Uterus (tissue), 4 donors: ENCODE measurements at regions of chr10 and their contacts with region 1.

Region 1: DNA sequence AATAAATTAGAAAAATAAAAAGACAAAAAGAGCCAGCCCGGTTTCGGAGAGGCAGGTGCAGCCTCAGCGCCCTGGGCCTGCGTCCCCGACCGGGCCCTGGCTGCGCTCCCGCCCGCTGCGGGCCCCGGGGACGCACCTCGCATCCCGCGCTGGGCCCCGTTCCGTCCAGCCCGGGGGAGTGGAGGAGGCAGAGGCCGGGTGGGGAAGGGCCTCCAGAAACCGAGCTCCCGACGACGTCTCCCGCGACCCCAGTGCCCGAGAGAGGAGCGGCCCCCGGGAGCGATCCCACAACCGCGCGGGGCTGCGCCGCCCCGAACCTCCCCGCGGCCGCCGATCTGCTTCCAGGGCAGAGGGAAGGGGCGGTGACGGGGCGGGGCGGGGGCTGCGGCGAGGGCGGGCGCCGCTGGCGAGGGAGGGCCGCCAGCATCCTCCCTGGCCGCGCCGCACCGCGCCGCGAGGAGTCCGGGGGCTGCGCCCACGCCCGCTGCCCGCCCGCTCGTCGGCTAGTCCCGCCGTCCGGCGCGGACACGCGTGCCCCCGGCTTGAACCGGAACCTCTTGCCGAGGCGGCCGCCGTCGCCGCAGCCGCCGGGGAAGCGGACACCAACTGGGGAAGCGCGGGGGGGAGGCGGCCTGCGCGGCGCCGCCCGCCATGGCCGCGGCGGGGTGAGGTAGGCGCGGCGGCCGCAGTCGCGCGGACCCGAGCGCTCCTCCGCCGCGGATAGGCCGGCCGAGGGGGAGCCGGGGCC is at the start of gene CCNY:
- DNase-seq: peak; percentile 77 to 78
- H3K4me3 ChIP-seq: peak within 1 kb of the TSS; percentile 71 to 95
- H3K27ac ChIP-seq: peak within 1 kb of the TSS; percentile 85
- H3K4me1 ChIP-seq: peaks cover 0 to 9% of the 10 kb centered on the region in 2 donors
- H3K27me3 ChIP-seq: no peaks in the 10 kb centered on the region
- CTCF ChIP-seq: no peak
- POLR2A ChIP-seq: peak; percentile 18 to 81
- total RNA-seq, gene CCNY: 28.2 to 79.2 (median 46.2) TPM

Region 2: DNA sequence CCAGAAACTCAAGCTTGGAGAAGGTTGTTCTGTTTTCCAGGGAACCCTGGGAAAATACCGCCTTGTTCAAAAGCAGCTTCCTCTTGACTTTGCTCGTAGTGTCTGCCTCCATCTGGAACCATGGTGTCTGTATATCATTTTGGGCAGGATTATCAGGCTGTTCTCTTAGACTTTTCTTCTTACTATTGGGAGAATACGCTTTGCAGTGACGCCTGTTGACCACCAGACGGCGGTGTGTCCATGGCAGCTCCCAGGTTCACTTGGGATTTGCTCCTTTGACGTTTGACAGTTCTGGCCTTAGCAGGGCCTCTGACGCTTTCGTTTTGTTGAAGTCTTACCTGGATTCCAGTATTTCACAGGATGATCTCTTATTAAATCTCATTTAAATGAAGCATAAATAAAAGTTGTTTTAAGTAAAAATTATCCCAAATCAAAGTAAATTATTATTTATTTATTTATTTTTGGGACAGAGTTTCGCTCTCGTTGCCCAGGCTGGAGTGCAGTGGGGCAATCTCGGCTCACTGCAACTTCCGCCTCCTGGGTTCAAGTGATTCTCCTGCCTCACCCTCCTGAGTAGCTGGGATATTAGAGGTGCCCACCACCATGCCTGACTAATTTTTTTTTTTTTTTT is 227.1 kb after region 1 on chr10:
- intact Hi-C with region 1: loop called (anchors 10 kb)
- DNase-seq: peak; percentile 58 to 61
- H3K4me3 ChIP-seq: no peak overlapping the region
- H3K27ac ChIP-seq: no peak overlapping the region
- H3K4me1 ChIP-seq: no peaks in the 10 kb centered on the region
- H3K27me3 ChIP-seq: no peaks in the 10 kb centered on the region
- CTCF ChIP-seq: peak; percentile 78 to 95 (median 82)
- POLR2A ChIP-seq: no peak